Activated naive CD4-positive, alpha-beta T cell treated with anti-CD3 and anti-CD28 coated beads for 36 hours (primary cell): ENCODE measurements at regions of chr6 and their contacts with region 1.

Region 1: GRCh38 chr6:41424370-41425058 is 89.1 kb downstream of the NCR2 start:
- DNase-seq: peak; percentile 92
- H3K4me3 Mint-ChIP-seq: no peak overlapping the region
- H3K27ac Mint-ChIP-seq: no peak overlapping the region
- H3K4me1 Mint-ChIP-seq: peaks cover 8% of the 10 kb centered on the region
- H3K27me3 Mint-ChIP-seq: peaks cover 11% of the 10 kb centered on the region

Region 2: DNA sequence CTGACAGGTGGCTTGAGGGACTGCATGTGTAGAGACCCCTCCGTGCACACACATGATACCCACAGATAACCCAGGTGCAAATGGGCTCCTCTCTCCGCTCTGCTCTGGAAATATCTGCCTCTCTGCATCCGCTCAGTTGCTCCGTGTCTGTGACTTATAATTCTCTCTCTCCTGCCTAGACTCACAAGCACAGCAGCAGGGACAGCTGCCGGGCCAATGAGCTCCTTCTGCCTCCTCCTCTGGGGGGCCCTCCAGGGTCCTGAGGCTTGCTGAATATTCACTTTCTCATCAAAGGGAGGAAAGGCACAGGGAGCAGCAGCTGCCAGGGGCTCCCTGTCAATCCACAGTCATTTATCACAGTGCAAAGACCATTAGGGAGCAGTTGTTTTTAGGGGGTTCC is 861.4 kb before region 1 on chr6:
- CTCF ChIA-PET with region 1: no interaction called
- intact Hi-C with region 1: no loop called
- DNase-seq: no peak
- H3K4me3 Mint-ChIP-seq: no peak overlapping the region
- H3K27ac Mint-ChIP-seq: no peak overlapping the region
- H3K4me1 Mint-ChIP-seq: no peaks in the 10 kb centered on the region
- H3K27me3 Mint-ChIP-seq: no peaks in the 10 kb centered on the region

Region 3: GRCh38 chr6:40871424-40871823 is 553.1 kb before region 1 on chr6:
- CTCF ChIA-PET with region 1: no interaction called
- intact Hi-C with region 1: no loop called
- DNase-seq: no peak
- H3K4me3 Mint-ChIP-seq: no peak overlapping the region
- H3K27ac Mint-ChIP-seq: no peak overlapping the region
- H3K4me1 Mint-ChIP-seq: no peaks in the 10 kb centered on the region
- H3K27me3 Mint-ChIP-seq: peaks cover 12% of the 10 kb centered on the region

Region 4: GRCh38 chr6:41442800-41443501 is 18.4 kb after region 1 on chr6:
- CTCF ChIA-PET with region 1: interaction called, 26 read pairs
- intact Hi-C with region 1: no loop called
- DNase-seq: peak; percentile 47
- H3K4me3 Mint-ChIP-seq: no peak overlapping the region
- H3K27ac Mint-ChIP-seq: no peak overlapping the region
- H3K4me1 Mint-ChIP-seq: peaks cover 40% of the 10 kb centered on the region
- H3K27me3 Mint-ChIP-seq: peaks cover 5% of the 10 kb centered on the region

Region 5: DNA sequence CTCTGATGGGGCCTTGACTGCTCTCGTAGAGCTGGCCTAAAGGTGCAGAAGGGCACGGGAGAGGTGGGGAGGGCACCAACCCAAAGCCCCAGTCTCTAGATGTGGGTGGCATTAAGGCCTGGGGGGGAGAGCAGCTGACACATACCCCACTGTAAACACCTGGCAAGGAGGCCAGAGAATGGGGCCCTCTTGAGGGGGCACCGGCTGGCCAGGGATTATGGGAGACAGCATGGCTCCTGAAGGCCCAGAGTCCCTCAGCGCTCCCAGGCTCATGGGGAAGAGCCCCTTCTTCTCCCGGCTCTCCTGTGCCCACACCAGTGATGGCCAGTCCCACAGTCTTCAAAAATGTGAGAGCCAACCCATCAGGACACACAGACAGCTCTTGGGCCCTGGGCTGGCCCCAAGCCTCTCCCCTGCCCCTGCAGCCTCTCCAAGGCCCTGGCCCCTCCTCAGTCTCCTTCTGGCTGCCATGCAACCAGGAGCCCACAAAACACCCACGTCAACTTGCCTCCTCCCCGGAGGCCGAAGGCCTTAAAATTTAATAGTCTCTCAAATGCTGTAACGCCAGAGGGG is 63.4 kb after region 1 on chr6:
- CTCF ChIA-PET with region 1: no interaction called
- intact Hi-C with region 1: no loop called
- DNase-seq: no peak
- H3K4me3 Mint-ChIP-seq: no peak overlapping the region
- H3K27ac Mint-ChIP-seq: no peak overlapping the region
- H3K4me1 Mint-ChIP-seq: no peaks in the 10 kb centered on the region
- H3K27me3 Mint-ChIP-seq: peaks cover 10% of the 10 kb centered on the region

Region 6: DNA sequence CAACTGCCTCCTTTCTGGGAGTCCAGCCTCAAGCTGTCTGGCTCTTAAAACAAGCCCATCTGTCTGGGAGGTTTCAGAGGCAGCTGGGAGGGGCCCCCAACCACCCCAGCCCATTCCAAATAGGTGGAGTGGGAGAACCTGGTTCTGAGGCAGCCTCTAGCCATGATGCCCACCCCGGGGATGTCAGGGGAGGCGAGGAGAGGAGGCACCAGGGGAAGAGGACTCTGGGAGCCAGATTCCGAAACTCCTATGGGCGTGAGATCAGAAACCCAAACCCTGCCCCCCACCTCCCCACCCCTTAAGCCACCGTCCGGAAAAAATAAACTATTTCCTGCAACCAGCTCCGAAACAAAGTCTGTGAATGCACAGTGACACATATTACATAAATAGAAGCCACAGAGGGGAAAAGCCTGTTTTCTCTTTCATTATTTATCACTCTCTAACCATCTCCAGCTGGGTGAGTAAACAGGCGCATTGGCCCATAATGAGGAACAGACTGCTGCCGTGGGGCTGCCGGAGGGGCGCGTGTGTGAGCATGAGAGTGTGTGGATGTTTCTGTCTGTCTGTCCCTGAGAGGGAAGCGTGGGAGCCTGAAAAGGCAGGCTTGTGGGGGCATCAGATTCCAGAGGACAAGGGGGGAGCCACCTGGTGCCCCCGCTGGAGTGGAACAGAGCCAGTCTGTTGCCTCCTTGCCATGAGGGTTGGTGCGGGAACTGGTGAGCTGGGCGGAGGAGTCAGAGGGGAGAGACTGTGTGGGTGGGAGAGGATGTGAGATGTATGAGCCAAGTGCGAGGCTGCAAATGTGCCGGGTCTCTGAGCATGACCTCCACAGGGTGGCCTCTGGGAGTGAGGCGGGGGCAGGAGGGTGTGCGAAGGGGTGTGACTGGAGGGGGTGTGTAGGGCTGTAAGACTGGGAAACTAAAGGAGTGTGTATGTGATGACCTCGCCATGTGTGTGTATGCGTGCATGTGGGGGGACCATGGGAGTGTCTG is 107.4 kb after region 1 on chr6:
- CTCF ChIA-PET with region 1: no interaction called
- intact Hi-C with region 1: loop called (anchors 5 kb)
- DNase-seq: peak; percentile 87
- H3K4me3 Mint-ChIP-seq: peak overlapping the region; percentile 73
- H3K27ac Mint-ChIP-seq: peak overlapping the region; percentile 94
- H3K4me1 Mint-ChIP-seq: peaks cover 39% of the 10 kb centered on the region
- H3K27me3 Mint-ChIP-seq: peaks cover 10% of the 10 kb centered on the region

Region 7: GRCh38 chr6:41560431-41561192 is 136.1 kb after region 1 on chr6:
- CTCF ChIA-PET with region 1: interaction called, 6 read pairs
- intact Hi-C with region 1: loop called (anchors 1 kb)
- DNase-seq: peak; percentile 94
- H3K4me3 Mint-ChIP-seq: peak overlapping the region; percentile 83
- H3K27ac Mint-ChIP-seq: peak overlapping the region; percentile 83
- H3K4me1 Mint-ChIP-seq: peaks cover 26% of the 10 kb centered on the region
- H3K27me3 Mint-ChIP-seq: no peaks in the 10 kb centered on the region

Region 8: DNA sequence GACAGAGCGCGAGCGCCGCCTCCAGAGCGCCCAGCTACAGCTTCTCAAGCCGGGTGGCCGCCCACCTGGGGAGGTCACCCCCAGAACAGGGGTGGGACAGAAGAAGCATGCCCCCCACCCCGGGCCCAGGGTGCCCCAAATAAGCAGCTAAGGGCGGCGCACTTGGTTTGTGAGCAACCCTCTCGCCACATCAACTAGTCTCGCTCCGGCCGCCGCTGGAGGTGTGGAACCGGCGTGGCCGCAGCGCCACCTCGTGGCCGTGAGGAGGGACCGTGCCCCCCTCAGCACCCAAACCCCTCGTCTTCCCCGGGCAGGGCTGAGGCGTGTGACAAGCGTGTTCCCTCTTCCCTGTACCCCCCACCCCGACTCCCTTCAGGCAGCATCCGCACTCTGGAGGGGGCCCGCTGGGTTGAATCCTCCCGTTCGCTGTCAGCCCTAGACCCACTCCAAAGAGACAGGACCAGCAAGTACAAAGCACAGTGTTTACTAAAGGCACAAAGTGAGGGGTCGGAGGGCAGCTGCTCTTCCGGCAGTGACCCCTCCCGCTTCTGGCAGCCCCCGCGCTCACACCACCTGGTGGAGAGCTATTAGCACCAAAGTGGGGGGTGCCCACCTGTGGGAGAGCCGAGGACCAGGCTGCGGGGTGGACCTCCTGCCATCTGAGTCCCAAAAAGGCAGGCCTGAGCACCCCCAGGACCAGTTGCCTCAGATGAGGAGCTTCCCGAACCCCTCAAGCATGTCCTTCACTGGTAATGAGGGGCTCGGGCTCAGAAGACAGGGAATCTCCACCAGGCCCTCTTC is 259.2 kb after region 1 on chr6:
- CTCF ChIA-PET with region 1: interaction called, 15 read pairs
- intact Hi-C with region 1: loop called (anchors 1 kb)
- DNase-seq: peak; percentile 84
- H3K4me3 Mint-ChIP-seq: peak overlapping the region; percentile 75
- H3K27ac Mint-ChIP-seq: peak overlapping the region; percentile 87
- H3K4me1 Mint-ChIP-seq: peaks cover 8% of the 10 kb centered on the region
- H3K27me3 Mint-ChIP-seq: no peaks in the 10 kb centered on the region